IMR-90 (cell line): ENCODE measurements at regions of chrX and their contacts with region 1.

Region 1: DNA sequence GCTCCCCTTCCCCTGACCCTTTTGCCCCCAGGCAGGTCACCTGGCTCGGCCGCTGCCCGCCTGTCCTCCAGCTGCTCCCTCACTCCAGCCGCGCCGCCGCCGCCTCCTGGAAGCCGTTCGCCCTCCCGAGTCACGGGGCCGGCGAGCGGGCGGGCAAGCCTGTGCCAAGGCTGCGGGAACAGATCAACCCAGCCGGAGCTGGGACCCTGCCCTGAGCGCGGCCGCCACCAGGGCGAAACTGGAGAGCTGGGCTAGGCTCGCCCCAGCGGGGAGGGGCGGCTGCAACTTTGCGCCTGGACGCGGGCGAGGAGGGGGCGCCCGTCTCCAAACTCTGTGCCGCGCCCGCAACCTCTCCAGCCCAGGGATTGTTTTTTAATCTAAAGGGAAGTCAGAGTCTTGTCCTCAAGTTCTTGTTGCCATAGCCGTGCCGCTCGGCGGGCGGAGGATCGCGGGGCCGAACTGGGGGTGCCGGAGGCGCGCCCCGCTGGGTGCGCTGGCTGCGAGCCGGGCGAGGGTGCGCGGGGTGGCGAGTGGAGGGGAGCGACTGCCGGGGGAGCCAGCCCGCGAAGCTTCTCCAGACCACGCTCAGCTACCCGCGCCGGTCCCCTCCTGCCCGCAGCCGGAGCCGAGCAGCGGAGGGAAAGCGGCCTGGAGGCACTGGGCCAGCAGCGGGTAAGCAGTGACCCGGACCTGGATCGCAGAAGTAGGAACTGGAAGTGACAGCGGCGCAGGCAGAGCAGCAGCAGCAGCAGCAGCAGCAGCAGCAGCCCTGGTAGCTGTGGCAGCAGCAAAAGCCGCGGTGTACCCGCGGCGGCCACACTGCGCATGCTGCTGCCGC is 13.4 kb downstream of the ARHGEF6 start:
- DNase-seq: peak; percentile 37
- ATAC-seq: peak; percentile 68
- H3K4me3 ChIP-seq: peak overlapping the region; percentile 52
- H3K27ac ChIP-seq: peak overlapping the region; percentile 50
- H3K4me1 ChIP-seq: peaks cover 3% of the 10 kb centered on the region
- H3K27me3 ChIP-seq: no peaks in the 10 kb centered on the region
- CTCF ChIP-seq: no peak
- POLR2A ChIP-seq: no peak
- RAD21 ChIP-seq: no peak

Region 2: DNA sequence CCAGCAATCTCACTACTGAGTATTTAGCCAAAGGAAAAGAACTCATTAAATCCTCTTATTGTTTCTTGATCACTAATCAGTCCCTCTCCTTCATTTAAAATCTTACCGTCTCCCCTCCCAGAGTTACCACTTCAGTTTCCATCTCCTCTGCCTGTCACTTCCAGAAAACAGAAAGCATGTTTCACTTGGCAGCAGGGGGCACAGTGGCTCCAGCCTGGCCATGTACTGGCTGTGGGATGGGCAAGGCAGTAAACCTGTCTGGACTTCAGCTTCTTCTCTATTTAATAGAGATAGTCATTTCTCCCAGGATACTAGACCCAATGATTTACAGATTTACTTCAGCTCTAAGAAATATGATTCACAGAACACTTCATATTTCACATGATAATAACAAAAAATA is 56.2 kb before region 1 on chrX:
- CTCF ChIA-PET with region 1: interaction called, 5 read pairs
- POLR2A ChIA-PET with region 1: no interaction called
- dilution Hi-C with region 1: no loop called
- in situ Hi-C with region 1: loop called (anchors 10 kb)
- intact Hi-C with region 1: no loop called
- DNase-seq: peak; percentile 36
- ATAC-seq: peak; percentile 76
- H3K4me3 ChIP-seq: no peak overlapping the region
- H3K27ac ChIP-seq: no peak overlapping the region
- H3K4me1 ChIP-seq: peaks cover 2% of the 10 kb centered on the region
- H3K27me3 ChIP-seq: no peaks in the 10 kb centered on the region
- CTCF ChIP-seq: peak; percentile 51
- POLR2A ChIP-seq: no peak
- RAD21 ChIP-seq: peak; percentile 60

Region 3: DNA sequence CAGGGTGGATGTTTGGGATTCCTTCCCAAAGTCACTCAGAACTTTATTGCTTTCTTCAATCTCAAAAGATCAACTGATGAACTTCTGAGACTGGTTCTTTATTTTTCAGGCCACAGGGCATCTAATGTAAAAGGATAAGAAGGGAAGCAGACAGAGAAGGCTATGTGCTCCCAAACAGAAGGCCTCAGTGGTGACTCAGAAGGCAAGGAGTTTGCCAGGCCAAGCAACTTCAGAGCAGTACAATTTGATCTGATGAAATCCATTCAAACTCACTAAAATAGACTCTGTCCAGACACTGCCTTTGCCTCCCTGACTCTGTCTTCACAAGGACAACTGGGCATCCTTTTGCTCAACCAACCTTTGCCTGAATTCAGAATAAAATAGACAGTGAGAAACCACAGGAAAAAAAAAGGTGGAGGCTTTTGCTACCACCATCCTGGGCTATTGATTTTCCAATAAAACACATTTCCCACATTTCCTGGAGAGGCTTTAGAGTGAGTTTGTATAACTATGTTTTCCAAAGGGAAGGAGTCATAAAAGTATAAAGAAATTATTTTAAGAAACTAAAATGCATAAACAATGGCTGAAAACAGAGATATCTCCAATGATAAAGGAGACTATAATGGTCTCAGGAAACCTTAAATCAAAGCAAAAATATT is 41.7 kb before region 1 on chrX:
- CTCF ChIA-PET with region 1: no interaction called
- POLR2A ChIA-PET with region 1: no interaction called
- dilution Hi-C with region 1: no loop called
- in situ Hi-C with region 1: no loop called
- intact Hi-C with region 1: no loop called
- DNase-seq: peak; percentile 72
- ATAC-seq: peak; percentile 95
- H3K4me3 ChIP-seq: no peak overlapping the region
- H3K27ac ChIP-seq: no peak overlapping the region
- H3K4me1 ChIP-seq: no peaks in the 10 kb centered on the region
- H3K27me3 ChIP-seq: no peaks in the 10 kb centered on the region
- CTCF ChIP-seq: no peak
- POLR2A ChIP-seq: no peak
- RAD21 ChIP-seq: no peak

Region 4: GRCh38 chrX:136736325-136737089 is 30.8 kb before region 1 on chrX:
- CTCF ChIA-PET with region 1: no interaction called
- POLR2A ChIA-PET with region 1: interaction called, 10 read pairs
- dilution Hi-C with region 1: no loop called
- in situ Hi-C with region 1: no loop called
- intact Hi-C with region 1: no loop called
- DNase-seq: no peak
- ATAC-seq: no peak
- H3K4me3 ChIP-seq: no peak overlapping the region
- H3K27ac ChIP-seq: no peak overlapping the region
- H3K4me1 ChIP-seq: no peaks in the 10 kb centered on the region
- H3K27me3 ChIP-seq: no peaks in the 10 kb centered on the region; the same call in none of the 2 replicates
- CTCF ChIP-seq: no peak
- POLR2A ChIP-seq: no peak
- RAD21 ChIP-seq: no peak

Region 5: GRCh38 chrX:136816970-136817369 is 49.6 kb after region 1 on chrX:
- CTCF ChIA-PET with region 1: no interaction called
- POLR2A ChIA-PET with region 1: no interaction called
- dilution Hi-C with region 1: no loop called
- in situ Hi-C with region 1: no loop called
- intact Hi-C with region 1: loop called (anchors 2 kb)
- DNase-seq: peak; percentile 47
- ATAC-seq: peak; percentile 66
- H3K4me3 ChIP-seq: no peak overlapping the region
- H3K27ac ChIP-seq: peak overlapping the region; percentile 44; the same call in 1 of the 2 replicates
- H3K4me1 ChIP-seq: peaks cover 3% of the 10 kb centered on the region
- H3K27me3 ChIP-seq: no peaks in the 10 kb centered on the region
- CTCF ChIP-seq: no peak
- POLR2A ChIP-seq: no peak
- RAD21 ChIP-seq: no peak

Region 6: GRCh38 chrX:136909706-136910564 is 142.6 kb after region 1 on chrX:
- CTCF ChIA-PET with region 1: no interaction called
- POLR2A ChIA-PET with region 1: no interaction called
- dilution Hi-C with region 1: no loop called
- in situ Hi-C with region 1: no loop called
- intact Hi-C with region 1: loop called (anchors 5 kb)
- DNase-seq: peak; percentile 91
- ATAC-seq: peak; percentile 82
- H3K4me3 ChIP-seq: peak overlapping the region; percentile 53
- H3K27ac ChIP-seq: peak overlapping the region; percentile 60
- H3K4me1 ChIP-seq: no peaks in the 10 kb centered on the region
- H3K27me3 ChIP-seq: no peaks in the 10 kb centered on the region
- CTCF ChIP-seq: no peak
- POLR2A ChIP-seq: no peak
- RAD21 ChIP-seq: no peak